Colonic mucosa (tissue), 4 donors: ENCODE measurements at regions of chr3 and their contacts with region 1.

Region 1: DNA sequence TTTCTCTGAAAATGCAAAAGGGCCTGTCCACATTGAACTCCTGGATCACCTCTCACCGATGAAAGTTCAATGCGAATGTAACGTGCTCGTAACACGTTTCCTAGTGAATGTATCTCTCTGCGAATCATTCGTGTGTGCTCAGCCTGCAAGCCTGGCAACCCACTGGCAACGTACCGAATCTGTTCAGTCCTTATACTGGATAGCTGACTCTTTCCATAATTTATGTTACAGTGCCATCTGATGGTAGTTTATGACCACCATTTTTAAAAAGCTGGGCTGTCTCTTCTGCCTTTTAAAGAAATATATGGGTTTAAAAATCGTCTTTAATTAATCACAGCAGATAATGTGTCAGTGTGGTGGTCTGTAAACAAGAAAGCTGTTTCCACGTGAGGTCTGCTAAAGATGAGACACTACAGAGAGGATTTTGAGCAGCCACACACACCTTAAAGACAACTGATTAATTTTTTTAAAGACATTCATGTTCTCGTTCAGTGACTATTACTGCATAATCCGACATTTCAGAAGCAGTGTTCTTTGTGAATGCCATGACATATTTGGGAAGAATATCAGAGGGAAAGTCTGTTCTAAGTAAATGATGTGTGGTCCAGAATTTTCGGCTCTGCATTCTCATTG is 69.4 kb upstream of the FOXP1 start:
- DNase-seq: peak; percentile 32
- H3K4me3 ChIP-seq: no peak overlapping the region
- H3K27ac ChIP-seq: no peak overlapping the region
- H3K4me1 ChIP-seq: no peaks in the 10 kb centered on the region
- H3K27me3 ChIP-seq: no peaks in the 10 kb centered on the region
- CTCF ChIP-seq: peak; percentile 36

Region 2: GRCh38 chr3:70064194-70064779 is 1588.6 kb before region 1 on chr3:
- intact Hi-C with region 1: loop called (anchors 10 kb)
- DNase-seq: peak; percentile 20
- H3K4me3 ChIP-seq: no peak overlapping the region
- H3K27ac ChIP-seq: no peak overlapping the region
- H3K4me1 ChIP-seq: no peaks in the 10 kb centered on the region
- H3K27me3 ChIP-seq: no peaks in the 10 kb centered on the region
- CTCF ChIP-seq: peak; percentile 42

Region 3: GRCh38 chr3:70527032-70527431 is 1125.9 kb before region 1 on chr3:
- intact Hi-C with region 1: loop called (anchors 5 kb)
- DNase-seq: no peak
- H3K4me3 ChIP-seq: no peak overlapping the region
- H3K27ac ChIP-seq: no peak overlapping the region
- H3K4me1 ChIP-seq: no peaks in the 10 kb centered on the region
- H3K27me3 ChIP-seq: no peaks in the 10 kb centered on the region
- CTCF ChIP-seq: no peak

Region 4: GRCh38 chr3:71601811-71602210 is 51.1 kb before region 1 on chr3:
- intact Hi-C with region 1: loop called (anchors 10 kb)
- DNase-seq: no peak
- H3K4me3 ChIP-seq: no peak overlapping the region
- H3K27ac ChIP-seq: no peak overlapping the region
- H3K4me1 ChIP-seq: no peaks in the 10 kb centered on the region
- H3K27me3 ChIP-seq: no peaks in the 10 kb centered on the region
- CTCF ChIP-seq: no peak

Region 5: GRCh38 chr3:71763426-71763825 is 110.5 kb after region 1 on chr3:
- intact Hi-C with region 1: no loop called
- DNase-seq: no peak
- H3K4me3 ChIP-seq: no peak overlapping the region
- H3K27ac ChIP-seq: no peak overlapping the region
- H3K4me1 ChIP-seq: no peaks in the 10 kb centered on the region
- H3K27me3 ChIP-seq: no peaks in the 10 kb centered on the region
- CTCF ChIP-seq: no peak